GM18951 (cell line): ENCODE measurements at regions of chr22 and their contacts with region 1.

Region 1: DNA sequence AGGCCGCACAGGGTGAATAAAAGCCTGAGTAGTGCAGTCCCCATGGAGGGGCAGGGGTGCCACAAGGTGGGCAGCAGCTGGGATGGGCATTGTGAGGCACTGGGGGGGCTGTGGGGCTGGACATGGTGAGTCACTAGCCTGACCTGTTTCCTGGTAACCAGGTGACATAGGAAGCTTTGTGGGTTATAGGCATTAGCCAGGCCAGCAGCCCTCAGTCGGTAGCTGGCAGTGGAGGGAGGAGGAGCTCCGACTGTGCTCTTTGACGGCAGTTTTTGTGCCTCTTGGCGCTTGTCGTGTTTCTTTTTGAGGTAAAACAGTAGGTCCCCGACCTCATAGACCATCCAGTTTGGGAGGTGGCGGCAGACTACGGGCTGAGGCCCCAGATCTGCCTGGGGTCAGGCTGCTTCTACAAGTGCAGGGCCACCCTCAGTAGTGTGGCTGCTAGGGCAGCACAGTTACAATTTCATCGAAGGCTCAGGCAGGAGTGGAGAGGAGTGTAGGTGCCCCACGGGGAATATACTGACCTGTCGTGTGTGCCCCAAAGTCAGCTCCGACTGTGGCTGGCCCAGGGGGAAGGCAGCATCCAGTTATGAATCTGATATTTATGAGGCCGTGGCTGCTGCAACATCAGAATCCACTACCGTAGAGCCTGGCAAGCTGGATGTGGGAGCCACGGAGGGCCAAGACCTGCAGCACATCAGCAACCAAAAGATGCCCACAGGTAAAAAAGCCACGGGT is 107.7 kb downstream of the CRYBB2 start:
- POLR2A ChIP-seq: no peak

Region 2: DNA sequence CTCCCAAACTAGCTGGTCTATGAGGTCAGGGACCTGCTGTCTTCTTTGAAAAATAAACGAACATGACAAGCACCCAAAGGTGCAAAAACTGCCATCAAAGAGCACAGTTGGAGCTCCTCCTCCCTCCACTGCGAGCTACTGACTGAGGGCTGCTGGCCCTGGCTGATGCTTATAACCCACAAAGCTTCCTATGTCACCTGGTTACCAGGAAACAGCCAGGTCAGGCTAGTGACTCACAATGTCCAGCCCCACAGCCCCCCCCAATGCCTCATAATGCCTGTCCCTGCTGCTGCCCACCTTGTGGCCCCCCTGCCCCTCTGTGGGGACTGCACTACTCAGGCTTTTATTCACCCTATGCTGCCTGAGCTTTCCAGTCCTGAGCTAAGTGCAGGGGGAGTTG is 1695.0 kb before region 1 on chr22 and contains the start of gene DRICH1:
- in situ Hi-C with region 1: loop called (anchors 10 kb)
- POLR2A ChIP-seq: no peak

Region 3: DNA sequence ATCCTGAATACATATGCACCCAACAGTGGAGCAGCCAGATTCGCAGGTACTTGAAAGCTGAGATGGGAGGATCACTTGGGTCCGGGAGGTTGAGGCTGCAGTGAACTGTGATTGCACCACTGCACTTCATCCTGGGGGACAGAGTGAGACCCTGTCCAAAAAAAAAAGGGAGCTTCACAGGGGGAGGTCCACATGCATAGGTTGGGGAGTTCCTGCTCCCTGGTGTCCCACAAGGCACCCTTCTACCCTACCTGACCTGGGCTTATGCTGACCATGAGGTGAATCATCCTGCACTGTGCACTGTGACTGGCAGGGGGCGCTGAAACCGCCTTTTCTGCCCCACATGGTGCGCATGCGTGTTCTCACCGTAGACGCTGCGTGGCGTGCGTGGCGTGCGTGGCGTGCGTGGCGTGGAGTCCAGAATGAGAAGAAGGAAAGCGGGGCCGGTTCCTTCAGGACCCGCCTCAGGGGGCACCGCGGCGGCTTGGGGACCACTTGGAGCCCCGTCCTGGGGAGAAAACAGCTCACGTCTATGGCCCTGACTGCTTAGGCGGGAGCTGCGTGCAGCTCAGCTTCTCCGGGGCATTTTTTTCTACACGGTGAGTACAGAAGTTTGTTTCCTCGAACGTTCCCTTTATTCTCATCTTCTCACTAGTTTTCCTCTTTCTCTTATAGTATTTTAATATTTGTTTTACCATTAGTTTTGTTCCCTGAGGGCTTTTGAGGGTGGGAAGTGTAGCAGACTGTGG is 120.7 kb after region 1 on chr22:
- in situ Hi-C with region 1: no loop called
- POLR2A ChIP-seq: peak; percentile 88

Region 4: GRCh38 chr22:25461301-25461700 is 134.1 kb after region 1 on chr22:
- in situ Hi-C with region 1: no loop called
- POLR2A ChIP-seq: no peak